ENCODE measurements at regions of chr15 and their contacts with region 1.

Region 1: GRCh38 chr15:70512772-70513362 is 250.5 kb downstream of the UACA start:
- DNase-seq: peak; percentile 70
- H3K4me3 ChIP-seq: no peak overlapping the region
- H3K27ac ChIP-seq: no peak overlapping the region
- H3K4me1 ChIP-seq: peaks cover 13 to 22% of the 10 kb centered on the region in 2 experiments; a peak in 2 of 4 replicates
- H3K27me3 ChIP-seq: no peaks in the 10 kb centered on the region
- CTCF ChIP-seq: peak; percentile 62
- EP300 ChIP-seq: no peak
- RAD21 ChIP-seq: peak; percentile 72

Region 2: GRCh38 chr15:70495991-70496599 is 16.8 kb before region 1 on chr15:
- CTCF ChIA-PET with region 1: interaction called, 10 read pairs
- POLR2A ChIA-PET with region 1: no interaction called
- DNase-seq: no peak
- H3K4me3 ChIP-seq: no peak overlapping the region
- H3K27ac ChIP-seq: no peak overlapping the region
- H3K4me1 ChIP-seq: peaks cover 42 to 45% of the 10 kb centered on the region in 2 experiments
- H3K27me3 ChIP-seq: no peaks in the 10 kb centered on the region
- CTCF ChIP-seq: no peak
- EP300 ChIP-seq: no peak
- RAD21 ChIP-seq: no peak

Region 3: GRCh38 chr15:70523616-70524015 is 10.7 kb after region 1 on chr15:
- CTCF ChIA-PET with region 1: interaction called, 14 read pairs
- POLR2A ChIA-PET with region 1: no interaction called
- DNase-seq: no peak
- H3K4me3 ChIP-seq: no peak overlapping the region
- H3K27ac ChIP-seq: no peak overlapping the region
- H3K4me1 ChIP-seq: peaks cover 22 to 26% of the 10 kb centered on the region in 2 experiments; a peak in 3 of 4 replicates
- H3K27me3 ChIP-seq: no peaks in the 10 kb centered on the region
- CTCF ChIP-seq: no peak
- EP300 ChIP-seq: no peak
- RAD21 ChIP-seq: no peak